GM12878 (cell line): ENCODE measurements at regions of chr9 and their contacts with region 1.

Region 1: GRCh38 chr9:6667633-6668280 is 22.2 kb upstream of the GLDC start:
- DNase-seq: no peak
- ATAC-seq: peak; percentile 77
- H3K4me3 ChIP-seq: no peak overlapping the region
- H3K27ac ChIP-seq: no peak overlapping the region
- H3K4me1 ChIP-seq: no peaks in the 10 kb centered on the region; the same call in 1 of the 2 replicates
- H3K27me3 ChIP-seq: no peaks in the 10 kb centered on the region
- CTCF ChIP-seq: peak; percentile 30 to 64 (median 64); a peak in 5 of 6 replicates
- EP300 ChIP-seq: no peak
- POLR2A ChIP-seq: no peak
- RAD21 ChIP-seq: peak; percentile 75

Region 2: DNA sequence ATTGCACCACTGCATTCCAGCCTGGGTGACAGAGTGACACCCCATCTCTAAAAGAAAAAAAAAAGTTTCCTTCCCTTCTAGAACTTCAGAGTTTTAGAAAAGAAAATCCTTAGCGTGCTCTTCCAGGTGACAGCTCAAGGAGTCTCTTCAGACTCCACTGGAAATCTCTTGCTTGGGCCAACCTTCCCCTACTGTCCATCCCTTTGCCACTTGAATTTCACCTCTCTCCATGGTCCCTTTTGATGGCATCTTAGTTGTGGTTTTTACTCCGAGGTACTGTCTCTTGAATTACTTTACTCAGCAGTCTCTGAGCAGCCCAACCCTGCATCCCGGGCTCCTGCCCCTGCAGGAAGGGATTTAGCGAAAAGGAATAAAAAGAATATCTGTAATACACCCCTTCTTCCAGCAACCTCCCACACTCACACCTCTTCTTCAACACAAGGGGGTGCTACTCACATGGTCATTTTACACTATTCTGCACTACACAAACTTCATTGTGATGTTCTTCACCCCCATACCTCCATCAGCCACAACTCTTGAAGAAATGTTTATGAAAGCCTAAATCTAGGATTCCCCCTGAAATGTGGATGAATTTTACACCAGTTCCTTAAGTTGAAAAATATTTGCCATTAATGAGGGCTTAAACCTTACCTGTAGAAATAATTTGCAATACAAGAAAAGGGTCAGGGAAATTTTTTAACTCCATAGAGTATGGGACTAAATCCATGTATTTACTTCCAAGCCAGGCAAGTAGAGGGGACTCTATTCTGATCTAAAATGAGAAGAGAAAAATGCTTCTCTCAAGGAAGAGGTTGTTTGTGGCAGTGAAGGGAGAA is 313.7 kb before region 1 on chr9:
- CTCF ChIA-PET with region 1: interaction called, 17 read pairs
- POLR2A ChIA-PET with region 1: no interaction called
- RAD21 ChIA-PET with region 1: interaction called, 3 read pairs
- SMC1A ChIA-PET with region 1: interaction called, 5 read pairs
- in situ Hi-C with region 1: no loop called
- intact Hi-C with region 1: no loop called
- DNase-seq: peak; percentile 45
- ATAC-seq: peak; percentile 95
- H3K4me3 ChIP-seq: no peak overlapping the region
- H3K27ac ChIP-seq: no peak overlapping the region
- H3K4me1 ChIP-seq: peaks cover 15% of the 10 kb centered on the region
- H3K27me3 ChIP-seq: no peaks in the 10 kb centered on the region
- CTCF ChIP-seq: peak; percentile 68 to 74 (median 74); a peak in 5 of 6 replicates
- EP300 ChIP-seq: no peak
- POLR2A ChIP-seq: no peak
- RAD21 ChIP-seq: peak; percentile 85

Region 3: DNA sequence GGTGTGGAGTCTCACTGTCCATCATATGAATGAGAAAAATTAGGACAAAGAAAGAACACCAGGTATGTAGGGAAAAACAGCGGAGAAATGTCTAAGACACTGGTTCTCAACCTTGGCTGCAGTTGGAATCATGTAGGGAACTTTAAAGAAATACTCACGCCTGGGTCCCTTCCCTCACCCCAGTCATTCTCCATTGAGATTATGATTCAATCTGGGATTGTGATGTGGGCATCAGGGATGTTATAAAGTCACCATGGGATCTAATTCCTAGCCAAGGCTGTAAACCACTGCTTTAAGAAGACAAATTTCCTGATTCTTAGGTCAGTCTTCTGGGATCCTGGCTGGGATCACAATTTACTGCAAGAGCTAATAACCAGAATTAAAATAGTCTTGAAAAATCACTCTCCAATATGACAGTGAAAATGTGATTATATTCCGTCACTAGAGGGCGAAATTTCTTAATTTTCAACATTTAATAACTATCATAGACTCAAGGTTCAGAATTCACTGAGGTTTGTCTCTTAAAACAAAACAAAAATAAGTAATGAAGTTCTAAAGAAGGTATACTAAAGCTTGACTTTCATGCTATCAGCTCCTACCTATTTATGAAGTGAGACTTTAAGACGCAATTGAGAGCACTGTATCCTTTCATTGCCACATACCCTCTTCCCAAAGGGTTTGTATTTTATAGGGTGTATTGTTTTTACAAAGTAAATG is 82.7 kb before region 1 on chr9:
- CTCF ChIA-PET with region 1: interaction called, 64 read pairs
- POLR2A ChIA-PET with region 1: interaction called, 3 read pairs
- RAD21 ChIA-PET with region 1: interaction called, 29 read pairs
- SMC1A ChIA-PET with region 1: interaction called, 63 read pairs
- in situ Hi-C with region 1: loop called (anchors 5 kb)
- intact Hi-C with region 1: loop called (anchors 1 kb)
- DNase-seq: no peak
- ATAC-seq: peak; percentile 85
- H3K4me3 ChIP-seq: no peak overlapping the region
- H3K27ac ChIP-seq: no peak overlapping the region
- H3K4me1 ChIP-seq: no peaks in the 10 kb centered on the region
- H3K27me3 ChIP-seq: no peaks in the 10 kb centered on the region
- CTCF ChIP-seq: peak in 2 of 3 experiments; percentile 13 to 35; a peak in 3 of 6 replicates
- EP300 ChIP-seq: no peak
- POLR2A ChIP-seq: no peak
- RAD21 ChIP-seq: peak; percentile 42; the same call in 1 of the 2 replicates

Region 4: DNA sequence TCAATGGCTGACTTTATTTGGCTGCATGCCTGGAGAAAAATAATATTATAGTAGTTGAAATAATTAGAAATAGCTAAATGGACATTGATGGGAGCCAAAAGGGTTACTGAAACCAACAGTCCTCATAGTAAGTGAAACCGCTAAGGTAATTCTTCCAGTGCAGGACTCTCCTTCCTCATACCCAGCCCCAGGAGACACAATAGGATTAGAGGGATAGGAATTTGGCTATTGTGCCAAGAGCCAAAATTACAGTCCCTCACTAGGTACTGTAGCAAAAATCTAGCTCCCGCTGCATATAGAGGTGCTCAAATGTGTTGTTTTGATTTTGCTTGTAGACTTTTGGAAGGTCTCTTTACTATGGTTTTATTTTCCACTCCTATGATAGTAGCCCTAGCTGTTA is 42.4 kb before region 1 on chr9:
- CTCF ChIA-PET with region 1: interaction called, 10 read pairs
- POLR2A ChIA-PET with region 1: no interaction called
- RAD21 ChIA-PET with region 1: interaction called, 3 read pairs
- SMC1A ChIA-PET with region 1: interaction called, 3 read pairs
- in situ Hi-C with region 1: no loop called
- intact Hi-C with region 1: no loop called
- DNase-seq: no peak
- ATAC-seq: no peak
- H3K4me3 ChIP-seq: no peak overlapping the region
- H3K27ac ChIP-seq: no peak overlapping the region
- H3K4me1 ChIP-seq: peaks cover 13% of the 10 kb centered on the region
- H3K27me3 ChIP-seq: no peaks in the 10 kb centered on the region
- CTCF ChIP-seq: no peak
- EP300 ChIP-seq: no peak
- POLR2A ChIP-seq: no peak
- RAD21 ChIP-seq: no peak

Region 5: DNA sequence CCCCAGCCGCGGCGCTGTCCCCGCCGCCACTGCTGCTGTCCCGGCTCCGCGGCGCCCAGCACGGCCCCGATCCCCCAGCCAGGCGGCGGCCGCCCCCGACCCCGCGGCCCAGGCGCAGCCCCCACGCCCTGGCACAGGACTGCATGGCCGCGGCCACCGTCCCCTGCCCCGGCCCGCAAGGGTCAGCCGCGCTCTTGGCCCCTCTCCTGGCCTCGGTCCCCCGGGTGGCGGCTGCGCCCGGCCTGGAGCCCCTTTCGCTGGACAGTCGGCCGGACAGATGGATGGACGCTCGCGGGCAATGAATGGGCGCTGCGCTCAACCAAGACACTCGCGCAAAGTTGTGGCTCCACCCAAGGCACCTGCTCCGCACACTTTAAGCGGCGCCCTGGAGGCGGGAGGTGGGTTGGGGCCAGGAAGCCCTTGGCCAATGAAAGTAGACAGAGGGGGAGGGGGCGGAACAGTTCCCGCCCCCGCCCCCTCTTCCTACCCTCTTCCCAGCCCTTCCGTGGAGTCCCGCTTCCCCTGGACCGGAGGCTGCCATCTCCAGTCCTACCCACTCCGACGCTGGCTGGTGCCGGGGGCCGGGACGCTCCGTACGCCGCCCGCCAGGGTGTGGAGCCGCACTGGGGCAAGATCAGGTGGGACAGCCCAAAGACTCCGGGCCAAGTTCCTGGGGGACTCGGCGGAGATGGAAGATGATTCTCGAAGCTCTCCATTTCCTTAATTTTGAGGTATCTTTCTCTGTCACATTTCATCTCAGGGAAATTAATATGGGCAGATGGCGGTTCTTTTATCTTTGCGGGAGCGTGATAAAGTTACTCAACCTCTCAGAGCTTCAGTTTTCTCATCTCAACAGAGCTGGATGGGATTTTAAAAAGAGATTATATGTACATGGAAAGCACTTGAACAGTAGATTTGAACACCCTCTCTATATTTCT is 22.1 kb before region 1 on chr9 and contains the start of gene GLDC:
- CTCF ChIA-PET with region 1: interaction called, 21 read pairs
- POLR2A ChIA-PET with region 1: interaction called, 8 read pairs
- RAD21 ChIA-PET with region 1: interaction called, 19 read pairs
- SMC1A ChIA-PET with region 1: interaction called, 14 read pairs
- in situ Hi-C with region 1: no loop called
- intact Hi-C with region 1: no loop called
- DNase-seq: no peak
- ATAC-seq: peak; percentile 91
- H3K4me3 ChIP-seq: peak within 1 kb of the TSS; percentile 94
- H3K27ac ChIP-seq: peak within 1 kb of the TSS; percentile 75
- H3K4me1 ChIP-seq: no peaks in the 10 kb centered on the region; the same call in 1 of the 2 replicates
- H3K27me3 ChIP-seq: no peaks in the 10 kb centered on the region
- CTCF ChIP-seq: no peak
- EP300 ChIP-seq: no peak
- POLR2A ChIP-seq: peak; percentile 80
- RAD21 ChIP-seq: no peak
- polyA plus RNA-seq, gene GLDC: 88.2 to 112 TPM

Region 6: GRCh38 chr9:6739218-6739617 is 71.5 kb after region 1 on chr9:
- CTCF ChIA-PET with region 1: interaction called, 6 read pairs
- POLR2A ChIA-PET with region 1: no interaction called
- RAD21 ChIA-PET with region 1: interaction called, 3 read pairs
- SMC1A ChIA-PET with region 1: interaction called, 10 read pairs
- in situ Hi-C with region 1: no loop called
- intact Hi-C with region 1: no loop called
- DNase-seq: no peak
- ATAC-seq: peak; percentile 59
- H3K4me3 ChIP-seq: no peak overlapping the region
- H3K27ac ChIP-seq: no peak overlapping the region
- H3K4me1 ChIP-seq: no peaks in the 10 kb centered on the region
- H3K27me3 ChIP-seq: no peaks in the 10 kb centered on the region
- CTCF ChIP-seq: peak; percentile 8 to 46 (median 36); a peak in 4 of 6 replicates
- EP300 ChIP-seq: no peak
- POLR2A ChIP-seq: no peak
- RAD21 ChIP-seq: peak; percentile 57